ENCODE measurements at regions of chr12 and their contacts with region 1.

Region 1: DNA sequence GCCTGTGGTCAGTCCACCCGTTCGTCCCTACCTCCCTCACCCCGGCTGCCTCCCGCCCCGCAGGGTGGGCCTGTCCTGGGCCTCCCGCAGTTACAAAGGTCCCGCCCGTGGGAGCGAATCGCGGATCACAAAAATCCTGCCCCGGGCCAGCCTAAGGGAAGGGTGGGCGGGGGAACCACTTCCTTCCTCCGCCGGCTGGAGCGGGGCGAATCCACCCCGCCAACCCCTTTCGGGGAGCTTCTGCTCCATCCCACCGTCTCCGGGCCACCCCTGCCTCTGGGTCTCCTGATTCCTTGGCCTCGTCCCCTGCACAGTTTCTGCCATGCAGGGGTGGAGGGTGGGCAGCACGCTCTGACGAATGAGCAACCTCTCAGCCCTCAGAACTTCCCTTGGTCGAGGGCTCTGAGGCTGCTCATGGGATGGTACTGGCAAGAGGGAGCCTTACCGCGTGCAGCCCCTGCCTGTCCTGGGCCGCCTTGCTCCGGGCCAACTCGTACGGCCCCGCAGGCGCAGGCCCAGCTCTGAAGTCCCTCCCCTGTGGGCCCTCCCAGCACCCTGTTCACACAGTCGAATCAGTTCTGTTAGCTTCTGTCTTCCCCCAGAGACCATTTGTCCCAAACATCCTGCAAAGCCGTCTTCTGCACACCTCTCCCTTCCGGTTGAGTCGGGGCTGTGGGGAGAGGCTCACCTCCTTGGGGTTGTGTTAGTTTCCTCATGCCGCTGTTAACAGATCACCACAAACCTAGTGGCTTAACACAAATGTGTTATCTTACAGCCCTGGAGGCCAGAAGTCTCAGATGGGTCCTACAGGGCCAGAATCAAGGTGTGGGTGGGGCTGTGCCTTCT is 589 bp upstream of the HVCN1 start:
- DNase-seq: no peak
- H3K4me3 ChIP-seq: peak overlapping the region; percentile 60 to 95 (median 64)
- H3K27ac ChIP-seq: peak overlapping the region; percentile 56 to 82
- H3K4me1 ChIP-seq: peaks cover 4 to 5% of the 10 kb centered on the region in 2 donors
- H3K27me3 ChIP-seq: no peaks in the 10 kb centered on the region
- CTCF ChIP-seq: no peak
- POLR2A ChIP-seq: no peak

Region 2: GRCh38 chr12:108972358-108972757 is 1717.1 kb before region 1 on chr12:
- intact Hi-C with region 1: loop called (anchors 5 kb)
- DNase-seq: no peak
- H3K4me3 ChIP-seq: no peak overlapping the region
- H3K27ac ChIP-seq: no peak overlapping the region
- H3K4me1 ChIP-seq: no peaks in the 10 kb centered on the region
- H3K27me3 ChIP-seq: no peaks in the 10 kb centered on the region
- CTCF ChIP-seq: no peak
- POLR2A ChIP-seq: no peak

Region 3: GRCh38 chr12:110637869-110638441 is 51.5 kb before region 1 on chr12:
- intact Hi-C with region 1: no loop called
- DNase-seq: no peak
- H3K4me3 ChIP-seq: no peak overlapping the region
- H3K27ac ChIP-seq: no peak overlapping the region
- H3K4me1 ChIP-seq: no peaks in the 10 kb centered on the region
- H3K27me3 ChIP-seq: no peaks in the 10 kb centered on the region
- CTCF ChIP-seq: no peak
- POLR2A ChIP-seq: no peak

Region 4: DNA sequence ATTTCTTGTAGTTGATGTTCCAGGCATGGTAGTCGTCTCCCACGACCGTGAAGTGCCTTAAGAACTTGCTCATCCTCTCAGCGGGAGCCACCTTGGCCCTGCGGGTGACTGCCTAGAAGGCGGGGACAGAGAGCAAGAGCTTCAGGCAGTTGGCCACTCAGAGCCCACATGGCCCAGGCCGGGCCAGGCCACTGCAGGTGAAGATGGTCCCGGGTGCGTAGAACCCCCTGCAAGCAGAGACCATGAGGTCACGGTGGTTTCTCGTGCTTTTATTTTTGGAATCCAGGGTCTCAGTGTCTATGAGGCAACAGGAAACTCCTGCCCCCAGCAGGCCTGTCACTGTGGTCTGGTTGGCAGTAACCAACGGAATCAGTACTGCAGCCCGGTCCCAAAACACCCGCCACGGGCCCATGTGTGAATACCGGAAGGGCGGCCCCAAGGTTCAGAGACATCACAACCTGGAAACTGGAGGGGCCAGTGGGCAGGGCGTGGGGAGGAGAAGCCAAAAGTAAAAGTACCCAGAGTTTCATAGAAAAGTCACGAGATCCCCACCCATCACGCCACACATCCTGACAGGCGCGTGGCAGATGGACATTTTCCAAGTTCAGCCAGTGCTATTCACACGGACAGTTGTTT is 28.0 kb before region 1 on chr12:
- intact Hi-C with region 1: no loop called
- DNase-seq: peak in 1 of 2 donors; percentile 22
- H3K4me3 ChIP-seq: no peak overlapping the region
- H3K27ac ChIP-seq: no peak overlapping the region
- H3K4me1 ChIP-seq: no peaks in the 10 kb centered on the region
- H3K27me3 ChIP-seq: no peaks in the 10 kb centered on the region
- CTCF ChIP-seq: no peak
- POLR2A ChIP-seq: no peak

Measured in breast epithelium (tissue), 4 donors.